BJ (cell line): ENCODE measurements at regions of chr18 and their contacts with region 1.

Region 1: DNA sequence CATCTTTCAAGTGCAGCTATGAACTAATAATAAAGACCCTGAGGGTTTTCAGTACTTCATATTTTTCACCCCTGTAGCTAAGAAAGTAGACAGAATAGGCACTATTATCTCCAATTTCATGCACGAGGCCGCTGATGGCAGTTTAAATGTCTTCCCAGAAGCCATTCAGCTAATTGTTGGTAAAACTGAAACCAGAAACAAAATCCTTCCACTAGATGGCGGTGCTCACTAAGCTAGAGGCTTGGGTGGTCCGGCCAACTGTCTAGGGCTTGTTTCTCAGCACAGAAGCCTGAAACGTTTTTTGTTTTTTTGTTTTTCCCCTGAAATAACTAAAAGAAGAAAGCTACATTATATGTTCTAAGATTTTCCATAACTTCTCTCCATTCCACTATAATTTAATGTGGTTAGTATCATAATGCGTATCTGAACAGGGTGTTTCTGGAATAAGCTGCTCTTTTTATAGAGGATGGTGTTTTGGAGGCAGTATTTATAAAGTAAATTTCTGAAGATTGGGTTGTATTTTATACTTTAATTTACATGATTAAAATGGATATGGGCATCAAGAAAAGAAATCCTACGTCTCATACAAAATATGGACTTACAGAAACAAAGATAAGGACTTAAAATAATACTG is 159.4 kb downstream of the PIK3C3 start:
- DNase-seq: peak; percentile 12
- H3K4me3 ChIP-seq: no peak overlapping the region
- H3K27me3 ChIP-seq: no peaks in the 10 kb centered on the region
- CTCF ChIP-seq: peak; percentile 79

Region 2: GRCh38 chr18:42126586-42126985 is 12.2 kb after region 1 on chr18:
- CTCF ChIA-PET with region 1: interaction called, 11 read pairs
- POLR2A ChIA-PET with region 1: no interaction called
- DNase-seq: no peak
- H3K4me3 ChIP-seq: no peak overlapping the region
- H3K27me3 ChIP-seq: no peaks in the 10 kb centered on the region
- CTCF ChIP-seq: no peak

Region 3: DNA sequence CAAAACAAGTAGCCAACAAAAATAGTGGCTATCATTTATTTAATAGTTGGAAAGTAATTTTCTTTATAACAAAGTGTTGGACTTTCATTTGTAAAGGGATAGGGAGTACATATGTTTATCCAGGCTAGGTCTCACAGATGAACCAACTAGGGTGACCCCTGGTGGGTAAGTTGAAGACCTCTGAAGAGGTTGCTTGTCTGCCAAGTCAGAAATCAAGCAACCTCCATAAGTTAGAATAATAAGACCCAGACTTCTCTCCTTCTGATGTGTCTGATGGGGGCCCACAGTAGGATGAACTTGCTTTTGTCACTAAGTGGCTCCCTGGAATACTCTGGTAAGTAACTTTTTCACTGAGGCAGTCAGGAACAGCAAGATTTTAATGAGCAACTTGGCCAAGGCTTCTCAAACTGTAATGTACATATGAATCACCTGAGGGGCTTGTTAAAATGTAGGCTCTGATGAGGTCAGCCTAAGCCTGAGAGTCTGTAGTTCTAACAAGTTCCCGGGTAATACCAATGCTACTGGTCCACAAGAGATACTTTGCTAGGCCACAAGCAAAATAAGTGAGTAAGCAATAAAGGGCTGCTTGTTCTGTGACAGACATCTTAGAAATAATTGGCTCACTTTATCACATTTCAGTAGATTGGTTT is 160.2 kb after region 1 on chr18:
- CTCF ChIA-PET with region 1: interaction called, 17 read pairs
- POLR2A ChIA-PET with region 1: no interaction called
- DNase-seq: no peak
- H3K4me3 ChIP-seq: no peak overlapping the region
- H3K27me3 ChIP-seq: no peaks in the 10 kb centered on the region
- CTCF ChIP-seq: no peak

Region 4: DNA sequence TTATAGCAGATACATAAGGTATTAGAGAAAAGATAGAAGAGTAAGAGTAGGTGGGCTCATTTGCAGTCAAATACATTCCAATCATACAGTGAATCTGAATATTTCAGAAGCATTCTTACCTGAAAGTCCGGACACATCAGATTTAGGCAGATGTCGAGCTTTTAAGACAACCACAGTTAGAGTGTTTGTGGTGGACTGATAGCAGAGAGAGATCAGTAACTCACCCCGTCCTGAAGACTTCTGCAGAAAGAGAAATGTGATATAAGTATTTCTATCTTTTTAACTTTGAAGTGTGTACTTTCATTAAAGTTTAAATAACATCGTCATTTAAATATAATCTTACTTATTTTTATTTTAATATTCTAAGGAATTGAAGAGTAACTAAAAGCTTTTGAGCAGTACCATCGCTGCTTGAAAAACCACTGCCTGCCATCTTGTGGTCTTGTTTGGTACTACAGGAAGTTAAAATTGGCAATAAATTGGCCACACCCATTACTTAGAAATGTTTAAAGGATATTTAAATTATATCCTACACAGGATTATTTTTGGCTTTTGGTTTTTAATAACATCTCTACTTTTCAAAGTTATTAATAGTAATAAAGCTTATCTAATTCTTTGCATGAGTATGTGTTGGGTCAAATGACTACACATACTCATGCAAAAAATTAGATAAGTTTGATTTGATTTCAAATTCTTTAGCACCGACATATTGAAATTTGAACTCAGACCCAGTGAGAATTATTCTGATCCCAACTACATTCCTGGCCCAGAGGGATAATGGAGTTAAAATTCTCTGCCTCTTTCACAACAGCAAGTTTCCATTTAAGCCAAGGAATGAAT is 1157.4 kb after region 1 on chr18:
- CTCF ChIA-PET with region 1: interaction called, 51 read pairs
- POLR2A ChIA-PET with region 1: no interaction called
- DNase-seq: peak; percentile 3
- H3K4me3 ChIP-seq: no peak overlapping the region
- H3K27me3 ChIP-seq: no peaks in the 10 kb centered on the region
- CTCF ChIP-seq: peak; percentile 74